ENCODE measurements at regions of chr13 and their contacts with region 1.

Region 1: GRCh38 chr13:110250258-110250891 is 56.6 kb downstream of the COL4A1 start:
- DNase-seq: no peak
- H3K4me3 ChIP-seq: no peak overlapping the region
- H3K27ac ChIP-seq: no peak overlapping the region
- H3K4me1 ChIP-seq: peaks cover 5% of the 10 kb centered on the region; the same call in 1 of the 2 replicates
- H3K27me3 ChIP-seq: no peaks in the 10 kb centered on the region
- CTCF ChIP-seq: no peak

Region 2: DNA sequence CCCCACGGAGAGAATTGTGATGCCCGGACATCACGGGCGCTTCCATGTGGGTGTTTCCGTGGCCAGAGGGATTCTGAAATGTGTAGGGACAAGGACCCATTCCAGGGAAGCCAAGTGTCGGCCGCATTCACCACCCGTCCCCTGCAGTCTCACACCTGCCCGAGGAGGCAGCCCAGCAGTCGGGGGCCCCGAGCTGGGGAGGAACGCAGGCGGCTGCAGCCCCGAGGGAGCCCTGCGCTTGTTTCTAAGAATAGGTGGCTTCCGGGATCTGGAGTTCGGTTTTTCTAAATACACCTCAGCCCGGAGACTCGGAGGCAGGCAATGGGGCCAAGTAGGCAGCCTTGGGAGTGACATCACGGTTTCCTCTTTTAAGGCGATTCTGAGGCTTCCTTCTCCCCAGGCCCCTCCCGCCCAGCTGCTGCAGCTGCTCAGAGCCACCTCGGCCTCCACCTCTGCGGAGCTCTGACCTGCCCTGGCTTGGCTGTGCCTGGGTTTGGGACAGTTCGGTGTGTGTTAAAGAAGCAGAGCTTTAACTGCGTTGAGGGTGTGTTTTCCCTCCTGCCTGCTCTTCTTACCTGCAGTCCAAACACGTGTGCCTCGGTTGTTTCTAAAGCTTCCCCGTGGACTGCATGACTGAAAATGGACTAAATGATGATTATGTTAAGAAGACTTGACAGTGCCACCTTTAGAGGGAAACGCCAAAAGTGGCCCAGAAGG is 137.2 kb after region 1 on chr13:
- CTCF ChIA-PET with region 1: no interaction called
- POLR2A ChIA-PET with region 1: no interaction called
- intact Hi-C with region 1: loop called (anchors 1 kb)
- DNase-seq: no peak
- H3K4me3 ChIP-seq: no peak overlapping the region
- H3K27ac ChIP-seq: peak overlapping the region; percentile 64; the same call in 1 of the 2 replicates
- H3K4me1 ChIP-seq: peaks cover 48% of the 10 kb centered on the region
- H3K27me3 ChIP-seq: no peaks in the 10 kb centered on the region
- CTCF ChIP-seq: no peak

Measured in PC-9 (cell line).